Panc1 (cell line): ENCODE measurements at regions of chr15 and their contacts with region 1.

Region 1: GRCh38 chr15:41774062-41774881 is at the start of gene MAPKBP1:
- DNase-seq: peak; percentile 91
- ATAC-seq: peak; percentile 95
- H3K4me3 ChIP-seq: peak within 1 kb of the TSS; percentile 65 to 99
- H3K27ac ChIP-seq: peak within 1 kb of the TSS; percentile 93
- H3K4me1 ChIP-seq: peaks cover 39% of the 10 kb centered on the region
- H3K27me3 ChIP-seq: no peaks in the 10 kb centered on the region
- CTCF ChIP-seq: peak; percentile 74
- total RNA-seq, gene MAPKBP1: 38.4 TPM

Region 2: DNA sequence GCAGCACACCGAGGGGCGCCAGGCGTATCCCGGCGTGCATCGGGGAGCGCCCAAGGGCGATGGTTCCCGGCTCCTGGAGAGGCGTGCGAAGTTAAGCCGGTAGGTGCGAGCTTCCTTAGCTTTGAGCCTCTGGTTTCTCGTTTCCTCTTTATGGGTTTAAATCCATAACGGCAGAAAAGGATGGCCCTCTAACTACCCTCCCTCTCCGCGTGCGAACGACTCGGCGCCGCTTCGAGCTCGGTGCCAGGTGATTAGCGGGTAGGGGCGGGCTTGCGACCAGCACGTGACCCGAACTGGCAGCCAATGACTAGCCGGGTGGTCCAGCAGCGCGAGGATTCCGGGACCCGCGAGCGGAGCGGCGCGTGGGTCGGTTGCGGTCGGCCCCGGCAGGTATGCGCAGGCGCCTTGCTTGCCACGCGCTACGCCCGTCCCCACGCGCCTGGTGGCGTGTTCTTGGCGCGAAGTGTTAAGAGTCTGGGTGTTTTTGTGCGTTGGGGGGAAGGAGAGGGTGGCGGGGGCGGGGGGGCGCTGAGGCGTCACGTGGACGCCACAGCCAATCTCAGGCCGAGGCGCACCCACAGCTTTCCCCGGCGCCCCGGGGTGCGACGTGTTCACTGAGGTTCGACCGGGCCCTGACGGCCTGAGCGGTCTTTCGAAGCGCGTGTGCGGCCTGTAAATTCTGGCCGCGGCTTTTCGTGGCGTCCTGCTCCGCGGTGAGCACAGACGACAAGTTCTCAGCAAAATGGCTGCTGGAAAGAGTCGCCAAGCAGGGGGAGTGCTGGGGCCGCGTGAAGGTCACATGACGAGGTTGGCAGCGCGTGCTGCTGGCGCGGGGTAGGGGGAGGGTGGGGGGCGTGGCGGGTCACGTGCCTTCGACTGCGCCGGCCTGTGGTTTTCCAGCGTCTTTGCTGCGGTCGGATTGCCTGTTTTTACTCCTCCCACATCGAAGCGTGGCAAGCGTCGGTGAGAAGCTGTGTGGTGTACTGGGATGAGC is 152.8 kb before region 1 on chr15:
- CTCF ChIA-PET with region 1: no interaction called
- POLR2A ChIA-PET with region 1: interaction called, 12 read pairs
- in situ Hi-C with region 1: no loop called
- intact Hi-C with region 1: no loop called
- DNase-seq: peak; percentile 73
- ATAC-seq: peak; percentile 94
- H3K4me3 ChIP-seq: peak overlapping the region; percentile 62 to 70
- H3K27ac ChIP-seq: peak overlapping the region; percentile 98
- H3K4me1 ChIP-seq: peaks cover 25% of the 10 kb centered on the region; the same call in 1 of the 2 replicates
- H3K27me3 ChIP-seq: no peaks in the 10 kb centered on the region
- CTCF ChIP-seq: no peak

Region 3: GRCh38 chr15:41795996-41796856 is 22.0 kb after region 1 on chr15:
- CTCF ChIA-PET with region 1: no interaction called
- POLR2A ChIA-PET with region 1: interaction called, 10 read pairs
- in situ Hi-C with region 1: no loop called
- intact Hi-C with region 1: no loop called
- DNase-seq: no peak
- ATAC-seq: no peak
- H3K4me3 ChIP-seq: no peak overlapping the region
- H3K27ac ChIP-seq: no peak overlapping the region
- H3K4me1 ChIP-seq: peaks cover 5% of the 10 kb centered on the region
- H3K27me3 ChIP-seq: no peaks in the 10 kb centered on the region
- CTCF ChIP-seq: no peak